ENCODE measurements at regions of chr15 and their contacts with region 1.

Region 1: GRCh38 chr15:67303490-67304363 is 49.1 kb downstream of the IQCH start:
- DNase-seq: no peak
- H3K4me3 Mint-ChIP-seq: no peak overlapping the region
- H3K27ac Mint-ChIP-seq: no peak overlapping the region
- H3K4me1 Mint-ChIP-seq: peaks cover 5% of the 10 kb centered on the region
- H3K27me3 Mint-ChIP-seq: peaks cover 5% of the 10 kb centered on the region

Region 2: GRCh38 chr15:66946578-66947164 is 357.1 kb before region 1 on chr15:
- intact Hi-C with region 1: loop called (anchors 1 kb)
- DNase-seq: peak; percentile 64
- H3K4me3 Mint-ChIP-seq: no peak overlapping the region
- H3K27ac Mint-ChIP-seq: no peak overlapping the region
- H3K4me1 Mint-ChIP-seq: peaks cover 24% of the 10 kb centered on the region
- H3K27me3 Mint-ChIP-seq: peaks cover 5% of the 10 kb centered on the region

Region 3: DNA sequence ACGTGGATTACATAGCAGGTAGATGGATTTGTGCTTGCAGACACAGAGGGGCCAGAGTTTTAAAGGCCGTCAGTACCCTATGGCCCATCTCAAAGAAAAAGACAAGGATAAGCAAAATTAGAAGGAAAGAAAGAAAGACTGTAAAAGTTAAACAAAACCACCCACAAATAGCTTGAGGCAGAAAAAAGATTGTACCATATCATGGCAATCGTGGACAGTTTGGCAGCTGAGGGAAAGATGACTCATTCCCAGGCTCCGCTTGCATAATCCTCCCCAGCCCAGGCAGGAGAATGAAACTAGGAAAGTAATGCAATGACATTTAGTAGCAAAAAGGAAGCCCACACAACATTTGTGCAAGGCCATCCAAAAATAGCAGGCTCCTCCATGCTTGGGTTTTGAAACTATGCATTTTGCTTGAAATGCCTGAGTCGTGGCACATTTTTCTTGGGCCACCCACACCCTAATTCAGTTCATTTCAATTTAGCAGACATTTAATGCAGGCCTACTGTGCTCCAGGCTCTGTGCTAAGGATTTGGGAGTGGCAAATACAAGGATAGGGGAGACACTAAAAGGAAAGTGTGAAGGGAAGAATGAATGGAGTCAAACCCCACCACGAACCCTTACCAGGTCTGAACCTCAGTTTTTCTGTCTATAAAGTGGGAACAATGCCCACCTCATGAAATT is 279.3 kb before region 1 on chr15:
- intact Hi-C with region 1: loop called (anchors 5 kb)
- DNase-seq: no peak
- H3K4me3 Mint-ChIP-seq: peak overlapping the region; percentile 29
- H3K27ac Mint-ChIP-seq: peak overlapping the region; percentile 37
- H3K4me1 Mint-ChIP-seq: peaks cover 45% of the 10 kb centered on the region
- H3K27me3 Mint-ChIP-seq: peaks cover 9% of the 10 kb centered on the region

Region 4: GRCh38 chr15:67039384-67040075 is 264.2 kb before region 1 on chr15:
- intact Hi-C with region 1: loop called (anchors 5 kb)
- DNase-seq: no peak
- H3K4me3 Mint-ChIP-seq: peak overlapping the region; percentile 51
- H3K27ac Mint-ChIP-seq: peak overlapping the region; percentile 77
- H3K4me1 Mint-ChIP-seq: peaks cover 22% of the 10 kb centered on the region
- H3K27me3 Mint-ChIP-seq: peaks cover 3% of the 10 kb centered on the region

Region 5: GRCh38 chr15:67254238-67255175 is 49.2 kb before region 1 on chr15 and contains the starts of genes AAGAB and IQCH:
- intact Hi-C with region 1: loop called (anchors 1 kb)
- DNase-seq: peak; percentile 98
- H3K4me3 Mint-ChIP-seq: peak within 1 kb of the TSS; percentile 100
- H3K27ac Mint-ChIP-seq: peak within 1 kb of the TSS; percentile 98
- H3K4me1 Mint-ChIP-seq: peaks cover 36% of the 10 kb centered on the region
- H3K27me3 Mint-ChIP-seq: peaks cover 18% of the 10 kb centered on the region
- total RNA-seq, gene AAGAB: 41.7 and 44.0 TPM in 2 replicates
- total RNA-seq, gene IQCH: 0.88 and 1.2 TPM in 2 replicates

Region 6: GRCh38 chr15:67433495-67434099 is 129.9 kb after region 1 on chr15:
- intact Hi-C with region 1: loop called (anchors 10 kb)
- DNase-seq: no peak
- H3K4me3 Mint-ChIP-seq: no peak overlapping the region
- H3K27ac Mint-ChIP-seq: no peak overlapping the region
- H3K4me1 Mint-ChIP-seq: no peaks in the 10 kb centered on the region
- H3K27me3 Mint-ChIP-seq: peaks cover 5% of the 10 kb centered on the region

Region 7: GRCh38 chr15:67521029-67521811 is 217.5 kb after region 1 on chr15 and contains the start of gene C15orf61:
- intact Hi-C with region 1: loop called (anchors 5 kb)
- DNase-seq: peak; percentile 84
- H3K4me3 Mint-ChIP-seq: peak within 1 kb of the TSS; percentile 95
- H3K27ac Mint-ChIP-seq: peak within 1 kb of the TSS; percentile 98
- H3K4me1 Mint-ChIP-seq: peaks cover 25% of the 10 kb centered on the region
- H3K27me3 Mint-ChIP-seq: no peaks in the 10 kb centered on the region
- total RNA-seq, gene C15orf61: 6.6 and 6.9 TPM in 2 replicates